ENCODE measurements at regions of chr17 and their contacts with region 1.

Region 1: DNA sequence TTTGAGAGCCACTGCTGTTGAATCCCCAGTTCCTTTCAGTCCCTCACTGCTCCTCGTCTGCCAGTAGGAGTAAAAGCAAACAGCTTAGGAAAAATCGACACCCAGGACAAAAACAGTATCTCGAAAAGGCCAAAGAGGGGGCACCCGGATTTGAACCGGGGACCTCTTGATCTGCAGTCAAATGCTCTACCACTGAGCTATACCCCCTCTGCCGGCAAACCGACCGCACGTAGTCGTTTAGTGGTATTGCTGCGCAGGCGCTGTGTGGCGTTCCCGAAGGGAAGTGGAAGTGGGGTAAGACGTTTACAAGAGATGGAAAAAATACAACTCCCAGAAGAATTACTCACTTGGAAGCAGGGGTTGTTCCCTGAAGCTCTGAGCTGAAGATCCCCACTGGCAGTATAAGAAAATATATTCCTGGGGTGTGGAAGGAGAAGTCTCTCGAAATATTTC is 2.2 kb upstream of the PLXDC1 start:
- DNase-seq: peak; percentile 92
- ATAC-seq: peak; percentile 80

Region 2: GRCh38 chr17:38693700-38694329 is 459.8 kb before region 1 on chr17:
- intact Hi-C with region 1: loop called (anchors 10 kb)
- DNase-seq: peak; percentile 93
- ATAC-seq: peak; percentile 99

Region 3: DNA sequence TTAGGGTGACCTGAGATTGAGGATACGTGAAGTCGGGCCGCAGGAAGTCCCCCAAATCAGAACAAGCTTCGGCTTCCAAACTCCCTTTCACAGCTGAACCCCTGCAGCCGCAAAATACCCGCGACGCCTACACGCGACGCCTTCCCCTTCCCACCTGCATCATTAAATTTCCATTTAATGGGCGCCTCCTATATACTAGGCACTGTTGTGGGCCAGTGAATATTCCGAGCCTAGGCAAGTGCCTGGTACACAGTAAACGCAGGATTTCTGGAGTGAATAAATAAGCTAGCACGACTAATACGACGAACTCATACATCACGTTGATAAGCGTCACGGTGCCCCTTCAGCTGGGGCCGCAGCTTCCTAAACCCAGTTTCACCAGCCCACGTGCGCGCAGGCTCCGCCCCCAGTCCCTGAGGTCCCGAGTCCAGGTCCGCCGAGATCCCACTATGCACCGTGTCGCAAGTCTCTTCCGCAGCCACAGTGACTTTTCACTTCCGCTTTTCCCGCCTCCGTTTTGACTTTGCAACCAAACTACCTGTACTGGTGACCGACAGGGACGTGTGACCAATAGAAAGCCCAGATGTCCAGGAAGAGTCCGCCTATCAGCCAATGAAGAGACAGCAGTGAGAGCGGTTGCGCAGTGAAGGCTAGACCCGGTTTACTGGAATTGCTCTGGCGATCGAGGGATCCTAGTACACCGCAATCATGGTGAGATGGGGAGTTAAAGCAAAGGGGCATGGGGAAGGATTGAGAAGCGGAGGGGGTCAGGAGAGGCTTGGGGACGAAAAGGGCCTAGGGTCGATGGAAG is 401.3 kb before region 1 on chr17 and contains the start of gene PSMB3:
- intact Hi-C with region 1: loop called (anchors 10 kb)
- DNase-seq: peak; percentile 97
- ATAC-seq: peak; percentile 86
- total RNA-seq, gene PSMB3: 175 TPM

Region 4: GRCh38 chr17:38982858-38983746 is 170.5 kb before region 1 on chr17:
- intact Hi-C with region 1: loop called (anchors 1 kb)
- DNase-seq: no peak
- ATAC-seq: peak; percentile 77

Region 5: GRCh38 chr17:39069114-39069756 is 84.4 kb before region 1 on chr17:
- intact Hi-C with region 1: loop called (anchors 2 kb)
- DNase-seq: no peak
- ATAC-seq: peak; percentile 62

Region 6: DNA sequence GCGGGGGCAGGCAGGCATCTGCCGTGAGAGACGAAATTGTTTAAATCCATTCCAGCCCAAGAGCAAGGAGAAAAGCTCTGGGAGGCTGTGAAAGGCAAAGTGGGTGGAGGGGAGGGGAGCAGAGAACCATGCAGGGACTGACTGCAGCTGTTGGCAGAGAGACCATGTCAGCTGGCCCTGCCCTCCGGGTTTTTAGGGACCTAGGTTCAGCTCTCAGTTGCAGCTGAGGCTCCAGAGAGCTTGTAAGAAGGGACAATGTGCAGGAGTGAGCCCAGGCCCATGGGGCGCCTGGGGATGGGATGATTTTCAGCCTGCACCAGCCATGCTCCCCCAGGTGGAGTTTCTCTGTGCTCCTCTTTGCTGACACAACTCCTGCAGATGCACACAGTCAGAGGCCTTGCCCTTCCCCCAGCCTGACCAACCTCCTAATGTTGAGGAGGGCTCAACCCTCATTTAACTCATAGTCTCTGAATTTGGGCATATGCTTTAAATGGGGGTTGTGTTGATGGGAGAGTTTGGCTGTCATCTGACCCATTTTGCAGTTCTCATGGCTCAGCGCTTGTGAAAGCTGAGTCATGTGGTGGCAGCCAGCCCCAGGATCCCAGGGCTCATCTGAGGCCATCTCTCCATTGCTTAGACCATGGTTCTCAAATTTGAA is 73.1 kb before region 1 on chr17:
- intact Hi-C with region 1: loop called (anchors 5 kb)
- DNase-seq: no peak
- ATAC-seq: peak; percentile 61